CD8-positive, alpha-beta T cell (primary cell): ENCODE measurements at regions of chr10 and their contacts with region 1.

Region 1: GRCh38 chr10:104308439-104308903 is 29.8 kb downstream of the ITPRIP start:
- DNase-seq: peak in 4 of 9 experiments; percentile 40 to 73 (median 54)
- ATAC-seq: peak; percentile 57
- H3K4me3 ChIP-seq: no peak overlapping the region
- H3K4me3 Mint-ChIP-seq: peak overlapping the region; percentile 61
- H3K27ac ChIP-seq: peak overlapping the region in 1 of 2 experiments; percentile 36
- H3K27ac Mint-ChIP-seq: peak overlapping the region; percentile 69
- H3K4me1 ChIP-seq: peaks cover 59% of the 10 kb centered on the region
- H3K4me1 Mint-ChIP-seq: peaks cover 70% of the 10 kb centered on the region
- H3K27me3 ChIP-seq: no peaks in the 10 kb centered on the region
- H3K27me3 Mint-ChIP-seq: no peaks in the 10 kb centered on the region
- CTCF ChIP-seq: no peak

Region 2: DNA sequence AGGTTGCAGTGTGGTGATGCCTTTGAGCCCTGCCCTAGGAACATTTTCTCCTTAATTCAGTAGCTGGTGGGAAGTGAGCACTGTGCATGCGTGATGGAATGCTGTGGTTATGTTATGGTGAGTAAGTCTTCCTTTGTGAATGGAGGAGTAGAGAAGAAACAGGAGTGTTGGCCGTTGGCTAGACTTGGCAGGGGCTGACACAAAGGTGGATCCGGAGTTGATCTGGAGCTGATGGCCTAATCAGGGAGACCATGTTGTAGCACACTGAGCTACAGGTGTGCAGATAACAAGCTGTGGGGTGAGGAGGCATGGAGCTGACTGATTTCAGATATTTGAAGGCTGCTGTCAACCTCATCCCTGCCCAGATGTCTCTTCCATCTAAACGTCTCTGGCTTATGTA is 1268.1 kb before region 1 on chr10:
- CTCF ChIA-PET with region 1: no interaction called
- POLR2A ChIA-PET with region 1: no interaction called
- intact Hi-C with region 1: no loop called
- DNase-seq: no peak
- ATAC-seq: no peak
- H3K4me3 ChIP-seq: no peak overlapping the region
- H3K4me3 Mint-ChIP-seq: no peak overlapping the region
- H3K27ac ChIP-seq: no peak overlapping the region
- H3K27ac Mint-ChIP-seq: no peak overlapping the region
- H3K4me1 ChIP-seq: no peaks in the 10 kb centered on the region
- H3K4me1 Mint-ChIP-seq: no peaks in the 10 kb centered on the region
- H3K27me3 ChIP-seq: no peaks in the 10 kb centered on the region
- H3K27me3 Mint-ChIP-seq: no peaks in the 10 kb centered on the region
- CTCF ChIP-seq: no peak

Region 3: GRCh38 chr10:104231784-104232612 is 76.5 kb before region 1 on chr10 and contains the start of gene CFAP43:
- CTCF ChIA-PET with region 1: no interaction called
- POLR2A ChIA-PET with region 1: no interaction called
- intact Hi-C with region 1: no loop called
- DNase-seq: peak; percentile 98 to 100 (median 99)
- ATAC-seq: peak; percentile 99
- H3K4me3 ChIP-seq: peak within 1 kb of the TSS; percentile 64 to 67
- H3K4me3 Mint-ChIP-seq: peak within 1 kb of the TSS; percentile 87
- H3K27ac ChIP-seq: peak within 1 kb of the TSS in 1 of 2 experiments; percentile 52
- H3K27ac Mint-ChIP-seq: peak within 1 kb of the TSS; percentile 79
- H3K4me1 ChIP-seq: peaks cover 4% of the 10 kb centered on the region
- H3K4me1 Mint-ChIP-seq: peaks cover 10% of the 10 kb centered on the region
- H3K27me3 ChIP-seq: peaks cover 0 to 10% of the 10 kb centered on the region in 2 experiments
- H3K27me3 Mint-ChIP-seq: peaks cover 9% of the 10 kb centered on the region
- CTCF ChIP-seq: no peak
- total RNA-seq, gene CFAP43: not detected

Region 4: GRCh38 chr10:104291439-104291951 is 17.0 kb before region 1 on chr10:
- CTCF ChIA-PET with region 1: interaction called, 264 read pairs
- POLR2A ChIA-PET with region 1: interaction called, 6 read pairs
- intact Hi-C with region 1: loop called (anchors 1 kb)
- DNase-seq: peak; percentile 80 to 93 (median 89)
- ATAC-seq: peak; percentile 100
- H3K4me3 ChIP-seq: no peak overlapping the region
- H3K4me3 Mint-ChIP-seq: no peak overlapping the region
- H3K27ac ChIP-seq: no peak overlapping the region
- H3K27ac Mint-ChIP-seq: no peak overlapping the region
- H3K4me1 ChIP-seq: peaks cover 3% of the 10 kb centered on the region
- H3K4me1 Mint-ChIP-seq: peaks cover 5% of the 10 kb centered on the region
- H3K27me3 ChIP-seq: no peaks in the 10 kb centered on the region
- H3K27me3 Mint-ChIP-seq: peaks cover 20% of the 10 kb centered on the region
- CTCF ChIP-seq: peak; percentile 99

Region 5: DNA sequence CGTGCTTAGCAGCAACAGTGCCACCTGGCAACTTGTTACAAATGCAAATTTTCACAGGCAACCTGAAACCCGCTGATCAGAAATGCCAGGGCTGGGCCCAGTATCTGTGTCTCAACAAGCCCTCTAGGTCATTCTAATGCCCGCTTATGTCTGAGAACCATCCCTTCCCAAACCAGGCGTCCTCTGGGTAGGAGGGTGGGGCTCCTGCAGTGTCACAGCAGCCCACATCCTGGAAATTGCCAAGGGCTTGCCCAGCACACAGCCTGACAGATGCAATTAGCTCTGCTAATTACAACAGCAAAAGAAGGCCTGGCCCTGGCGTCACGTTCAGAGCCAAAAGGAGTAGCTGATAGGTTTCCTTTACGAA is 13.9 kb after region 1 on chr10:
- CTCF ChIA-PET with region 1: interaction called, 54 read pairs
- POLR2A ChIA-PET with region 1: interaction called, 6 read pairs
- intact Hi-C with region 1: no loop called
- DNase-seq: peak in 1 of 9 experiments; percentile 56
- ATAC-seq: peak; percentile 42
- H3K4me3 ChIP-seq: peak overlapping the region in 1 of 2 experiments; percentile 6
- H3K4me3 Mint-ChIP-seq: peak overlapping the region; percentile 75
- H3K27ac ChIP-seq: peak overlapping the region in 1 of 2 experiments; percentile 75
- H3K27ac Mint-ChIP-seq: peak overlapping the region; percentile 85
- H3K4me1 ChIP-seq: peaks cover 83% of the 10 kb centered on the region
- H3K4me1 Mint-ChIP-seq: peaks cover 91% of the 10 kb centered on the region
- H3K27me3 ChIP-seq: no peaks in the 10 kb centered on the region
- H3K27me3 Mint-ChIP-seq: no peaks in the 10 kb centered on the region
- CTCF ChIP-seq: no peak

Region 6: DNA sequence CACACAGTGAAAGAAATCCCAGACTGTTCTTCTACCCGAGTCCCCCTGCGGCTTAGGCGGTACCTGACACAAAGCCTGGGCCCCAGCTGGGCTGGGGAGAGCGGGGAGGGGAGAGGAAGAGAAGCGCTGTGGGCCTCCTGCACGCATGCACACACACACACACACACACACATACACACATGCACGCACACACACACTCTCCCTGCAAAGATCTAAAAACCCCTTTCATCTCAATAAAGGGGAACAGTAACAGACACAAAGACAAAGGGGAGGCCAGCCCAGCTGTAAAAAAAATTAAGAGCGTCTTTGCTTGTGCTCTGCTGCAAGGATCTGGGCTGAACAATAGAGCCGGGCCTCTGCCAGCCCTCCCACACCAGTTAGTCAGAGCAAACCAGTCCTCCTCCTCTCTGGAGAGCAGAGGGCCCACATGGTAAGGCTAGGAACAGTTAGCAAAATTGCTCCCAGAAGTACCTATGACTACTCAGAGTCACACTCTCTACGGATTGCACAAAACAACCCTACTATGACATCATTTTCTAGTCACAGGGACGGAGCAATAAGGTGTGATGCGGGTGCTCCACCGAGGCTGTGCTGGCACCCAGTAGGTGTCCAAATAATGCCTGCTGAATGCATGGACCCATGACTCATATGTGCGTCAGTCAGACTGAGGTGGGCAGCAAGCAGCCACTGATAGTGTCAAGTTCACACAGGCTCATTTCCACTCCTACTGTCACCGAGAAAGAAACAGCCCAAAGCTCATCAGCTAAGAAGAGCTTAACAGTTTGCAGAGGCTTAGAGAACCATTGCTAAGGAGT is 20.6 kb after region 1 on chr10:
- CTCF ChIA-PET with region 1: interaction called, 87 read pairs
- POLR2A ChIA-PET with region 1: interaction called, 19 read pairs
- intact Hi-C with region 1: loop called in 1 of 2 experiments (anchors 2 kb)
- DNase-seq: peak; percentile 51 to 96 (median 79)
- ATAC-seq: peak; percentile 71
- H3K4me3 ChIP-seq: peak overlapping the region; percentile 9 to 39
- H3K4me3 Mint-ChIP-seq: peak overlapping the region; percentile 78
- H3K27ac ChIP-seq: peak overlapping the region; percentile 67 to 79
- H3K27ac Mint-ChIP-seq: peak overlapping the region; percentile 97
- H3K4me1 ChIP-seq: peaks cover 95% of the 10 kb centered on the region
- H3K4me1 Mint-ChIP-seq: peaks cover 98% of the 10 kb centered on the region
- H3K27me3 ChIP-seq: no peaks in the 10 kb centered on the region
- H3K27me3 Mint-ChIP-seq: no peaks in the 10 kb centered on the region
- CTCF ChIP-seq: no peak

Region 7: DNA sequence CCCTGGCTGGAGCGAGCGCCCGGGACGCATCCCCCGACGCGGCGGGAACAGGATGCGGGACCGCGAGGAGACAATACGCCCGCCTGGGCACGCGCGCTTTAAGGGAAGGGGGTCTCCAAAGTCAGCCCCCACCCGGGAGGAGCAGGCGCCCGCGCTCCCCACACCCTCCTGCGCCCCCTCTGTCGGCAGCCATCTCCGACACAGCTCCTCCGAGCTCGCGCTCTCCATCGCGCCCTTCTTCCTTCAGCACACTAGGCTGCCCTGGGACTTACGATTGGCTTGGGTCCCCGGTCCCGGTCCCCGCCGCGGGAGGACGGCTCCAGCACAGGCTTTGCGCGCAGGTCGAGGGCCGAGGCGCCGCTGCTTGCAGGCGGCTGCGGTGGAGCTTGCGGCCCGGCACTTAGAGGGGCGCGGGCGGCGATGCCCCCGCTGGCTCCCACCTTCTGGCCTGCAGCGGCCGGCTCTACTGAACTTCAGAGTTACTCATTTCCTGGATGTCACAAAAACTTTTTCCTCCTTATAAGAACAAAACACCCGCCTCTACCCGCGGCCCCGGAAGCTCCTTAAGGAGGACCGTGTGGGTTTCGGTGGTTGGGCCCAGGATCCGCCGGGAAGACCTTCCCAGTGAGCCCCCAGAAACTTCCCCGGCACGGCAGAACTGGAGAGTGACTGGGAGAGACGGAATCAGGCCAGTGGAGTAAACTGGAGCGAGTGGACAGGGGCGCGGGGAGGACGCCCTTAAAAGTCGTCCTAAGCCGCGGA is 29.7 kb after region 1 on chr10 and contains the start of gene ITPRIP:
- CTCF ChIA-PET with region 1: interaction called, 87 read pairs
- POLR2A ChIA-PET with region 1: interaction called, 39 read pairs
- intact Hi-C with region 1: loop called in 1 of 2 experiments (anchors 1 kb)
- DNase-seq: peak; percentile 47 to 89 (median 76)
- ATAC-seq: peak; percentile 67
- H3K4me3 ChIP-seq: peak within 1 kb of the TSS; percentile 92 to 98
- H3K4me3 Mint-ChIP-seq: peak within 1 kb of the TSS; percentile 93
- H3K27ac ChIP-seq: peak within 1 kb of the TSS; percentile 92 to 93
- H3K27ac Mint-ChIP-seq: peak within 1 kb of the TSS; percentile 97
- H3K4me1 ChIP-seq: peaks cover 46% of the 10 kb centered on the region
- H3K4me1 Mint-ChIP-seq: peaks cover 54% of the 10 kb centered on the region
- H3K27me3 ChIP-seq: no peaks in the 10 kb centered on the region
- H3K27me3 Mint-ChIP-seq: no peaks in the 10 kb centered on the region
- CTCF ChIP-seq: no peak
- total RNA-seq, gene ITPRIP: 212 to 214 TPM